ENCODE measurements at regions of chr14 and their contacts with region 1.

Region 1: DNA sequence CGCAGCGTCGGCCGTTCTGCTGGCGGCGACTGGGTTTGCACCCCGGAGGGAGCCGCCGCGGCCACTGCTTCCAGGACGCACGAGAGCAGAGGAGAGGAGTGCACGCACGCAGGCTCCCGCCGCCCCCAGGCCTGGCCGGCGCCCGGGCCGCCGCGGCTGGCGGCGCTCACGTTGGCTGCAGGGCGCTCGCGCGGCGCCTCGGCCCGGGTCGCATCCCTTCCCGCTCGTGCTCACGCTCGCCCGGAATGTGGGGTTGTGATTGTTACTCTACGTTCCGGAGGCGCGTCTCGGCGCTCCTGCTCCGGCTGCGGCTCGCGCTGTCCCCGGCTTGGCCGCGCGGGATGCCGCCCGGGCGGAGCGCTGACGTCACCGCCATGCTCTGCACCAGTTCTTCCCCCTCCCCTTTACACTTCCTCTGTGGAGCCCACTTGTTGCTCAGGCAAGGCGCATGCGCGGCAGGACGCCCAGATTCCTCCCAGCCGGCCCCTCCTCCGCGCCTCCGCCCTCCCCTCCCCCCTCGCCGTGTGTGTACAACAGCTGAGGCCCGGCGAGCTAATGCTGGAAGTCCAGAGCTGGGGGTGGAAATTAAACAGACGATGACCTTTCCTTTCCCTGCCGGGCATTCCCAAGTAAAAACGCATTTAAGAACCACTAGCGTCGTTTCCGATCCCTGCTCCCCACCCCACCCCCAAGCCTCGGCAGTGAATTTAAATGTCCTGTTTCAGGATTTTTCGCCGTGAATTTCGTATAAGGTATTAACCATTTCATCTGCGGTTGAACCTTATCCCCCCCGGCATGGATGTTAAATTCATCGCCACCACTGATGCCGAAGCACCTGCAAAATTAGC is at the start of gene IRF2BPL:
- DNase-seq: peak; percentile 99
- ATAC-seq: peak; percentile 68
- total RNA-seq, gene IRF2BPL: 38.8 TPM

Region 2: DNA sequence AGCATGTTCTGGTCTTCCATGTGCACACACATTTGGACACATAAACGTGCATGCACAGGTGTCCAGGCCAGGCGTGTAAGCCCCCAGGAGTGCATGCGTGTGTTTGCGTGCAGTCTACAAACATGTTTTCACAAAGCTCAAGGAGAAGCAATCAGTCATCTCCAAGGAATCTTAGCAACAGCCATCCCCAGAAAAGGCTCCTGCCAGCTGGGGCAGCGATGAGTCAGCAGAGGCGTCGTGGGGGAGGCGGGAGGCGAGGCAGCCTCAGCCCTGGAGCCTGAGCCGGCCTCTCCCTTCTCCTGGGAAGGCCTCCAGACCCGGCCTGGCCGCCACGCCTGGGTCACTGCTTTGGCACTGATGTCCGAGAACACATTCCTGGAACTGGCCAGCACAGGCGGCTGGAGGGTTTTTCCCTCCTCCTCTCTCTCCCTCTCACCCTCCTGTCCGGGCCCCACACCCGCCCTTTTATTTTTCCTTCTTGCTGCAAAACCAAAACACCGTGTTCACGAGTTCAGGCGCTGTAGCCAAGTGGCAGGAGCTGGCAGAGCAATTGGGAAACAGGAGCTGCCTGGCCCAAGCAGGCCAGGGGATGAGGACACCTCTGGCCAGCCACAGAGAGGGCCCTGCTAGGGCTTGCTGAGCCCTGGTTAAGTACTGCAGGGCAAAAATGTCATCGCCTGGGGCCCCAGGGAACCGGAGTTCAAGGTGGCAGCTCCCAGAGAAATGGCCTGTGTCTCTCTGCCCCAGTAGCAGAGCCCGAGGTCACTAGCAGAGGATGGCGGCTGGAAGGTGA is 109.7 kb before region 1 on chr14:
- intact Hi-C with region 1: loop called (anchors 5 kb)
- DNase-seq: peak; percentile 96
- ATAC-seq: peak; percentile 87

Region 3: GRCh38 chr14:77053046-77053841 is 24.6 kb after region 1 on chr14:
- intact Hi-C with region 1: loop called (anchors 1 kb)
- DNase-seq: peak; percentile 89
- ATAC-seq: peak; percentile 78

Region 4: GRCh38 chr14:77241942-77242341 is 213.3 kb after region 1 on chr14:
- intact Hi-C with region 1: no loop called
- DNase-seq: no peak
- ATAC-seq: no peak

Measured in Right ventricle myocardium superior (tissue), 1 donor.